ENCODE measurements at regions of chr3 and their contacts with region 1.

Region 1: DNA sequence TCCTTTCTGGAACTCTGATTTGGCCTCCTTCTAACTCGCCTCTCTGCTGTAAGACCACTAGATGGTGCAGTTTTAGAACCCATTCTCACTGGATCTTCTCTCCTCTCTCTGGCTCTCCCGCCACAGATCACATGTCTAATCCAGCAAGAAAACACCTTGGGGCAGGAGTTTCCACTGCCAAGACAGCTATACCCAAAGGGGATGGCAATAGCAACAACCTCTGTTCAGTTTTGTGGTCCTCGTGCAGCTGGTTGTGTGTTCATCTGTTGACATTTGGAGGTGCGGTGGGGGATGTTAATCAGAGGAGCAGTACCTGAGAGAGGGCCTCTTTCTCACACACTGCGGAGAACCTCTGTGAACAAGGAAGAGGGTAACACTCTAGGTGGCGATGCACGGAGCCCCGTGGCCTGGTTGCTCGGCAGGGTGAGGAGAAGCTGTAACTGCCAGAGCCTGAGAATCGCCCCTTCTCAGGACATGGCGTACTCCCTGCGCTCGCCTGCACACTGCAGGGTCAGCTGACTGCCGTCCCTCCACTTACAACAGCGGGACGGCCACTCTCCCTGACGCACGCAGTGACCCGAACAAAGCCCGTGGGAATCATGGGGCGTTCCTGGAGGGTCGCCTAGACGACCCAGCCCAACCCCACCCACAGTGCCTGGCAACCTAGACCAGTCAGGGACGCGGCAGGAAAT is at the start of gene TEX55:
- DNase-seq: peak in 1 of 3 donors; percentile 37
- ATAC-seq: peak; percentile 88
- H3K4me3 ChIP-seq: no peak within 1 kb of the TSS
- H3K4me1 ChIP-seq: no peaks in the 10 kb centered on the region
- CTCF ChIP-seq: peak; percentile 41
- total RNA-seq, gene TEX55: not detected

Region 2: DNA sequence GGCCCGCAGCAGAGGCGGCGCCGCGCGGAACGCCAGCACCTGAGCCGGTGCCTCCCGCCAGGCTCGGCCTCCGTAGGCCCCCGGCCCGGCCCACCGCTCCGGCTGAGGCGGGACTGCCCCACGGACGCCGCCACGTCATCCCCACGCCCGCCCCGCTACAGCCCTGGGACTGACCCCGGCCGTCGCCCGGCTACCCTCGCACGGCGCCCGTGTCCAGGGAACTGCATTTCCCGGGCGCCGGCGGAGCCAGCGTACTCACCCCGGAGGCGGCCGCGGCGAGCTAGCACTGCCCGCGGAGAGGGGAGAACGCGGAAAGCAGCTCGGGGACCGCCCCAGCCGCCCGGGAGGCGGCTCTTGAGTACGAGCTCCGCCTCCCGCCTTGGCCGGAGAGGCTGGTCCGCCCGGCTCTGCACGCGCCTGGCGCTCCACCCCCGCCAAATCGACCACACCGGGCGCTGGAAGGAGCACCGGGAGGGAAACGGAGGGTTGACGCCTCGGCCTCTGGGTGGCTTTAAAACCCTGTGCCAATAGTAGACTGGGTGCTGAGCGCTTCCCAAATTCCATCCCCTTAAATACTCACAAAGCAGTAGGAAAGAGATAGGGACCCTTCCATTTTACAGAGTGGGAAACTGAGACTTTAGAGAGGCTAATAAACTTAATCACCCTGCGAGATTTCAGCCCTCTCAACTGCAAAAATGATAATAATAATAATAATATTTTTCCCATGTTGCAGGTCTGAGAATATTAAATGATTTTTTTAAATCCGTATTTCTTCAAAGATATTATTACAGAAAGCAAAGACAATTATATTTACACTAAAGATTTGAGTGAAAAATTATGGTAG is 95.2 kb after region 1 on chr3 and contains the start of gene B4GALT4:
- intact Hi-C with region 1: loop called in 1 of 2 experiments (anchors 1 kb)
- DNase-seq: peak; percentile 92 to 94 (median 93)
- ATAC-seq: peak; percentile 96
- H3K4me3 ChIP-seq: peak within 1 kb of the TSS; percentile 73
- H3K4me1 ChIP-seq: peaks cover 26% of the 10 kb centered on the region
- CTCF ChIP-seq: no peak
- total RNA-seq, gene B4GALT4: 35.0 to 73.9 (median 58.9) TPM

Region 3: DNA sequence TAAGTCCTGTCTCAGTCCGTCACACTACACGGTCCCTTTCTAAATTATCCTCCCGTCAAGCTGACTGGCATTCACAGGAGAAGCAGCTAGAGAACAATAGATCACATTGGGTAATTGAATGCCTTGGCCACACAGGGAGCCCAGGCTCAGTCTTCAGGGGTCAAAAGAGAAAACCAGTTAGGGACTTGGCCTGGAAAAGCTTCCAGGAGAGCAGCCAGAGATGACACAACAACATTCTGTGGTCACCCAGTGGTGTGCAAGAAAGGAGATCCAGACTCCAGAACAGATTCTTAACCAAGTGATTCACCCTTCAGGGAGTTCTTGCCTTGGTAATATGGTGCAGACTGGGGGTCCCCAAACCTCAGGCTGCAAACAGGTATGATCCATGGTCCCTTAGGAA is 164.4 kb after region 1 on chr3:
- intact Hi-C with region 1: no loop called
- DNase-seq: no peak
- ATAC-seq: peak; percentile 51
- H3K4me3 ChIP-seq: no peak overlapping the region
- H3K4me1 ChIP-seq: peaks cover 6% of the 10 kb centered on the region
- CTCF ChIP-seq: no peak

Measured in mucosa of descending colon (tissue), 3 donors.